ENCODE measurements at regions of chr17 and their contacts with region 1.

Region 1: DNA sequence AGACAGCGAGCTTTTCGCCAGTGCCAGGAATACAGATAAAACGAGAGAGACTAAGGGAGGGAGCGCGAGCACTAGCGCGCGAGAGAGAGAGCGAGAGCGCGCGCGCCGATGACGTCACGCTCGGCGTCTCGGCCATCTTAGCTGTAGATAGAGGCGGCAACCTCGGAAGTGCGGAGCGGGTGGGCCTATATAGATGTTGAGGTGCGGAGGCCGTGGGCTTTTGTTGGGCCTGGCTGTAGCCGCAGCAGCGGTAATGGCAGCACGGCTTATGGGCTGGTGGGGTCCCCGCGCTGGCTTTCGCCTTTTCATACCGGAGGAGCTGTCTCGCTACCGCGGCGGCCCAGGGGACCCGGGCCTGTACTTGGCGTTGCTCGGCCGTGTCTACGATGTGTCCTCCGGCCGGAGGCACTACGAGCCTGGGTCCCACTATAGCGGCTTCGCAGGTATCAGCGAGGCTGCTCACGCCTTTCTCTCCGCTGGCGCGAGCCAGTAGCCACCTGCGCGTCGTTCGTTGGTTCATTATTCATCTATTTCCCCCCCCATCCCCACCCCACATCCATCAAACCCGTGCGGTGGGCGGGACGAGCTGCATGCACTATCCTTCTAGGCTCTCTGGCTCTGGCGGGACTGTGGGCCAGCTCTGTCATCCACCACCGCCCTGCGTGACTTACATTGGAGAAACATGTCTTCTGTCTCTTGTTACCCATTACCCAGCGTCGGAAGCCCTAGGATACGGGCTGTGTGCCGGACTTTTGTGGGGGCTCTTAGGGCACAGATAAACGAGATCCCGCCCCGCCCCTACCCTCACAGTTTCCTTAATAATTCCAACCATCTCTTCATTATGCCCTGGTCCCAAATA is 795 bp downstream of the CYB5D2 start:
- DNase-seq: peak; percentile 88
- H3K4me3 Mint-ChIP-seq: peak overlapping the region; percentile 98
- H3K27ac Mint-ChIP-seq: peak overlapping the region; percentile 100
- H3K4me1 Mint-ChIP-seq: peaks cover 32% of the 10 kb centered on the region
- H3K27me3 Mint-ChIP-seq: no peaks in the 10 kb centered on the region

Region 2: DNA sequence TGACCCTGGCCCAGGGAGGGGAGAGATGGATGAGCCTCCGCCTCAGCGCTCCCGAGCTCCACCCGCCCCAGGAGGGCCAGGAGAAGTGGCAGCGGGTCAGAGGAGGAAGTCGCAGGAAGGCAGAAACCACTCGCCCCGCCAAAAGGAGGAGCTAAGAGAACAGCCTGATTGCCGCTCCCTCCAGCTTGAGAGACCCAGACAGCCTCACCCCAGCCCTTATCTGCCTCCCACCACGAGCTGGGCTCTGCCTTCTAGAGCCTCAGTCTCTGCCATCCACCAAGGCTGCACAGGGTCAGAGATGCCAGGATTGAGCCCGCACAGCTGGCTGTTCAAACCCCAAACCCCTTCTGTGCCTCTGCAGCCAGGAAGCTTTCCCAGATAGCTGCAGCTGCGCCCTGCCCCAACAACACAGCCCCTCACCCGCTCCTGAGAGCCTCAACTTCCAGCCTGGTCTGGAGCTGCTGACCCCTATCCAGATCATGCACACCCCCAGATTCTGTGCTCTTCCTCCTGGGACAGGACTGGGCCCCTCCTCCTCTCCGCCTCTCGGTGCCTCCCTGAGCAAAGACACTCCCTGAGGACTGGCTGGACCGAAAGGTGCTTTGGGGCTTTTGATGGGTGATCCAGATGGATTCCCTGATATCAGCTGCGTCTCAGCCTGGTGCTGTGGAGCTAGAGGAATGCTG is 178.5 kb before region 1 on chr17:
- intact Hi-C with region 1: loop called (anchors 5 kb)
- DNase-seq: peak; percentile 73
- H3K4me3 Mint-ChIP-seq: peak overlapping the region; percentile 85
- H3K27ac Mint-ChIP-seq: peak overlapping the region; percentile 86
- H3K4me1 Mint-ChIP-seq: peaks cover 45% of the 10 kb centered on the region
- H3K27me3 Mint-ChIP-seq: no peaks in the 10 kb centered on the region

Region 3: DNA sequence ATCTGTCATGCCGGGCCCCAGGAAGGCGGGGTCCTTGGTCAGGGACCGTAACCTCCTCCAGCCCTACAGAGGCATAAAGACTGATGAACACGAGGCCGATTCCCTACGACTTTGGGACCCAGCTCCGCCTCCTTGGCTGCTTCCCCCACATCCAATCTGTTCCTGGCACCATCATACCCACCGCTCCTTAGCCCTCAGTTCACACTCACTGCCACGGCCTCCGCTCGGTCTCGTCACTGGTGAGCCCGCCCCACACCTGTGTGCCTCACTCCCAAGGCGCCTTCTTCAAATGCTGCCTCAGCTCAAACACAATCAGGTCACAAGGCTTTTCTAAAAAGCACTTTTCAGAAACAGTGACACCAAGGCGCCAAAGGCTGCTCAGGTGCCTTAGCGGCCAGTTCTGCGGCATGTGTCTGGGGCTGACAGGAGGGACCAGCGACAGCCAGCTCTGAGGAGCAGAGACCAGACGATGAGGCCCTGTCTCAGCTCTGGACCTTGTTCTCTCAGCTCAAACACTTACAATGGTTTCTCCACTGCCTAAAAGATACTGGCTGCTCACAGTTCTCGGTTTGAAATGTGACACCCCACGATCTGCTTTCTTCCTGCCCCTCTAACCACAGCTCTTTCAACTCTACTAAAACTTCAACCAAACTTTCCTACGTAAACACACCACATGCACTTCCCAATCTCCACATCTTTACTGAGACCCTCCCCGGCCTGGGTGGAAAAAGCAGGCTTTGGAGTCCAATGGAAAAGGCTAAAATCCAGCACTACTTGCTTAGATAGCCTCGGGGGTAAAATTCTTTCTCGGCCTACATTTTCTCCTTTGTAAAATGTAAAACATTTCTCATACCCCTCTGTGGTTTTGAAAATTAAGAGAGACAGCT is 32.4 kb after region 1 on chr17:
- intact Hi-C with region 1: loop called (anchors 1 kb)
- DNase-seq: peak; percentile 46
- H3K4me3 Mint-ChIP-seq: peak overlapping the region; percentile 73
- H3K27ac Mint-ChIP-seq: peak overlapping the region; percentile 87
- H3K4me1 Mint-ChIP-seq: peaks cover 39% of the 10 kb centered on the region
- H3K27me3 Mint-ChIP-seq: no peaks in the 10 kb centered on the region

Region 4: GRCh38 chr17:4199818-4200402 is 56.1 kb after region 1 on chr17:
- intact Hi-C with region 1: no loop called
- DNase-seq: no peak
- H3K4me3 Mint-ChIP-seq: no peak overlapping the region
- H3K27ac Mint-ChIP-seq: no peak overlapping the region
- H3K4me1 Mint-ChIP-seq: peaks cover 7% of the 10 kb centered on the region
- H3K27me3 Mint-ChIP-seq: no peaks in the 10 kb centered on the region

Measured in activated T-helper 2 cell treated with anti-CD3 and anti-CD28 coated beads, Interferon-gamma antibody, Interleukin-2, Interleukin-4, amounts not matched to agents 10 μg/mL and 5 μg/mL and 100 μg/mL, durations not matched to agents 14 hours and 24 hours and 36 hours (primary cell).